GM12878 (cell line): ENCODE measurements at regions of chr11 and their contacts with region 1.

Region 1: GRCh38 chr11:21511835-21512440 is 680.9 kb upstream of the ANO5 start:
- DNase-seq: no peak
- ATAC-seq: peak; percentile 98
- H3K4me3 ChIP-seq: no peak overlapping the region
- H3K27ac ChIP-seq: no peak overlapping the region
- H3K4me1 ChIP-seq: no peaks in the 10 kb centered on the region
- H3K27me3 ChIP-seq: no peaks in the 10 kb centered on the region
- CTCF ChIP-seq: peak; percentile 54 to 75 (median 69)
- EP300 ChIP-seq: no peak
- POLR2A ChIP-seq: no peak
- RAD21 ChIP-seq: peak; percentile 54; the same call in 1 of the 2 replicates

Region 2: DNA sequence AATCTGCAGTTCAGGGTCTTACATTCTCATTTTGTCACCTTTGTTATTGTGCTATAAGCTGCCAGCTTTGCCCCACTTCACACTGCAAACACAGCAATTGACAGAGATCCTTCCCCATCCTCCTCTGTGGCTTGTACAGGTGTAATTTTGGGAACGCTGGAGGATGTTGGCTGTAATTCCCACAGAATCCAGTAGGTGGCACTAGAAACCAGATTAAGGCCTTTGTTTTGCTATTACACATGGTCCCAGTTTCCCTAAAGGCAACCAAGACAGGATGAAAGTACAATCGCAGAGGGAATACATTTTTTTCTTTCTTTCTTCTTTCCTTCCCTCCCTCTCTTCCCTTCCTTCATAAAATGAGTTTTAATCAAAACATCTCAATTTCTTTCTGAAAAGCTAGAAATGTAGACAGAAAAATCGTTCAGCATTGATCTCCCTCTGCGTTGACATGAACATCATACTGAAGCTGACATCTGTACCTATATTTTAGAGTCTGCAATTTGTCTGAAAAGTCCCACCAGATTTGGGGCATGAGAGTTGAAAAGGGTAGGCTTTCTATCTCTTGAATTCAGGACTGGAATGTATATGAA is 863.9 kb before region 1 on chr11:
- CTCF ChIA-PET with region 1: interaction called, 22 read pairs
- POLR2A ChIA-PET with region 1: no interaction called
- RAD21 ChIA-PET with region 1: interaction called, 3 read pairs
- SMC1A ChIA-PET with region 1: interaction called, 7 read pairs
- in situ Hi-C with region 1: loop called (anchors 5 kb)
- intact Hi-C with region 1: loop called (anchors 1 kb)
- DNase-seq: peak; percentile 12
- ATAC-seq: peak; percentile 74
- H3K4me3 ChIP-seq: no peak overlapping the region
- H3K27ac ChIP-seq: no peak overlapping the region
- H3K4me1 ChIP-seq: no peaks in the 10 kb centered on the region
- H3K27me3 ChIP-seq: no peaks in the 10 kb centered on the region; a peak in 1 of 4 replicates
- CTCF ChIP-seq: peak; percentile 83 to 94 (median 91); a peak in 5 of 6 replicates
- EP300 ChIP-seq: no peak
- POLR2A ChIP-seq: no peak
- RAD21 ChIP-seq: peak; percentile 79

Region 3: GRCh38 chr11:21179770-21180169 is 332.2 kb before region 1 on chr11:
- CTCF ChIA-PET with region 1: interaction called, 27 read pairs
- POLR2A ChIA-PET with region 1: no interaction called
- RAD21 ChIA-PET with region 1: interaction called, 20 read pairs
- SMC1A ChIA-PET with region 1: interaction called, 15 read pairs
- in situ Hi-C with region 1: no loop called
- intact Hi-C with region 1: loop called (anchors 10 kb)
- DNase-seq: no peak
- ATAC-seq: no peak
- H3K4me3 ChIP-seq: no peak overlapping the region
- H3K27ac ChIP-seq: no peak overlapping the region
- H3K4me1 ChIP-seq: no peaks in the 10 kb centered on the region
- H3K27me3 ChIP-seq: no peaks in the 10 kb centered on the region
- CTCF ChIP-seq: no peak
- EP300 ChIP-seq: no peak
- POLR2A ChIP-seq: no peak
- RAD21 ChIP-seq: no peak

Region 4: DNA sequence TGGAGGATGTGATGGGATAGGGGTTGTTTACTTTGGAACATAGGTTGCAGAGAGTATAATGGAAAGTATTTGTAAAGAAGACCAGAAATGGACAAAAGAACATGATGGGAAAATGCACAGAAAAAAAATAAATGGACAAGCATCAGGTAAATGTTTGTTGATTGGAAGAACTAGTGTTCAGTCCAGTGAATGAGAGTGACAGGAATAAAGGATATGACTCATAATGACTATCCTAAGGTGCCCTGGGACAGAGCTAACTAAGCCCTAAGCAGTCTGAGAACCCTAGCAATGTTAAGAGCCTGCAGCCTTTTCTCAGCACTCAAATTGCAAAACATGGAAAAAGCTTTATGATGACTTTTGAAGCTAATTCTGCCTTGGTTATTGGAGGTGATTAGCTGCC is 51.9 kb before region 1 on chr11:
- CTCF ChIA-PET with region 1: interaction called, 11 read pairs
- POLR2A ChIA-PET with region 1: no interaction called
- RAD21 ChIA-PET with region 1: interaction called, 4 read pairs
- SMC1A ChIA-PET with region 1: interaction called, 5 read pairs
- in situ Hi-C with region 1: no loop called
- intact Hi-C with region 1: no loop called
- DNase-seq: no peak
- ATAC-seq: no peak
- H3K4me3 ChIP-seq: no peak overlapping the region
- H3K27ac ChIP-seq: no peak overlapping the region
- H3K4me1 ChIP-seq: no peaks in the 10 kb centered on the region
- H3K27me3 ChIP-seq: no peaks in the 10 kb centered on the region
- CTCF ChIP-seq: no peak
- EP300 ChIP-seq: no peak
- POLR2A ChIP-seq: no peak
- RAD21 ChIP-seq: no peak

Region 5: DNA sequence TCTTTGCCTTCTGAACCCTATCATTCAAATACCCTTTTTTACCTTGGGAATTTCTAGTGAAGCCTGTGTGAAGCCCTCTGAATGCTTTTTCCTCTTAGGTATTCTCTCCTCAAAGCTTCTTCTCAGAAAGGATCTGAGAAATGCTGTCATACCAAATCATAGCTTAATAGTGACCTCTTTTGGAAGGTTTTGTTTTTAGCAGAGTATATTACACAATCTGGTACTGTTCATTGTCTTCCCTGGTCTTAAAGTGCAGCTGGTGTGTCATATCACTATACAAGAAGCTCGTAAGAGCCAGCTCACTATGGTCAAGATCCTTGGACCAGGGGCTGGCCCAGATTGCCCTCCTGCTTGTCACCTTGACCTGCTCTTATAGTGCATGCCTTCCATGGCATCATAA is 476.5 kb after region 1 on chr11:
- CTCF ChIA-PET with region 1: interaction called, 3 read pairs
- POLR2A ChIA-PET with region 1: no interaction called
- RAD21 ChIA-PET with region 1: no interaction called
- SMC1A ChIA-PET with region 1: interaction called, 3 read pairs
- in situ Hi-C with region 1: no loop called
- intact Hi-C with region 1: loop called (anchors 10 kb)
- DNase-seq: no peak
- ATAC-seq: peak; percentile 67
- H3K4me3 ChIP-seq: no peak overlapping the region
- H3K27ac ChIP-seq: no peak overlapping the region
- H3K4me1 ChIP-seq: no peaks in the 10 kb centered on the region
- H3K27me3 ChIP-seq: no peaks in the 10 kb centered on the region
- CTCF ChIP-seq: no peak; a peak in 1 of 6 replicates
- EP300 ChIP-seq: no peak
- POLR2A ChIP-seq: no peak
- RAD21 ChIP-seq: no peak